ENCODE measurements at regions of chr6 and their contacts with region 1.

Region 1: DNA sequence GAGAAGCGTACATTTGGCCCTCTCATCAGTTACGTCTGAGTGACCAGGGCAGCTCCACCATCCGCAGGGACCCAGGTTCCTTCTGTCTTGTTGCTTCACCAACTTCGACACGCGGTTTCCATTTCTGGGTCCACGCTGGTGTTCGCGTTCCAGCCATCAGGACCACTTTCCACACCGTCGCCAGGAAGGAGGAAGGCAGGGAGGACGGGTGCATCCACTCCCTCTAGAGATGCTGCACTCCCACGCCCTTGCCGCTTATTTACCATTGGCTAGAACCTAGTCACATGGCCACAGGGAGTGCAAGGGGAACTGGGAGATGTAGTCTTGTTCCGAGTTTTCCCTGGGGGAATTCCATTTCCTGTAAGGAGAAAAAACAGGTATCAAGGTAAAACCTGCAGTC is 33.2 kb upstream of the SNX9 start:
- DNase-seq: no peak
- ATAC-seq: peak; percentile 38

Region 2: GRCh38 chr6:157804448-157805327 is 14.8 kb after region 1 on chr6:
- intact Hi-C with region 1: loop called (anchors 2 kb)
- DNase-seq: no peak
- ATAC-seq: no peak